HAP-1 (cell line): ENCODE measurements at regions of chr6 and their contacts with region 1.

Region 1: GRCh38 chr6:113909234-113909856 is 52.2 kb downstream of the MARCKS start:
- DNase-seq: peak; percentile 36 to 58
- H3K4me3 ChIP-seq: no peak overlapping the region
- H3K4me1 ChIP-seq: no peaks in the 10 kb centered on the region
- H3K27me3 ChIP-seq: 0 out of 2 replicates have a peak, but pooled peaks cover 2% of the 10 kb centered on the region

Region 2: GRCh38 chr6:112163295-112164257 is 1745.8 kb before region 1 on chr6:
- in situ Hi-C with region 1: loop called (anchors 25 kb)
- DNase-seq: peak; percentile 49 to 90
- H3K4me3 ChIP-seq: no peak overlapping the region
- H3K4me1 ChIP-seq: no peaks in the 10 kb centered on the region
- H3K27me3 ChIP-seq: peaks cover 4% of the 10 kb centered on the region; the same call in 1 of the 2 replicates

Region 3: GRCh38 chr6:112337209-112337638 is 1572.1 kb before region 1 on chr6:
- in situ Hi-C with region 1: loop called (anchors 25 kb)
- DNase-seq: peak; percentile 73 to 76
- H3K4me3 ChIP-seq: no peak overlapping the region
- H3K4me1 ChIP-seq: no peaks in the 10 kb centered on the region
- H3K27me3 ChIP-seq: no peaks in the 10 kb centered on the region

Region 4: GRCh38 chr6:114267897-114268296 is 358.6 kb after region 1 on chr6:
- in situ Hi-C with region 1: no loop called
- DNase-seq: no peak
- H3K4me3 ChIP-seq: no peak overlapping the region
- H3K4me1 ChIP-seq: no peaks in the 10 kb centered on the region
- H3K27me3 ChIP-seq: no peaks in the 10 kb centered on the region